T-cell (primary cell): ENCODE measurements at regions of chr17 and their contacts with region 1.

Region 1: DNA sequence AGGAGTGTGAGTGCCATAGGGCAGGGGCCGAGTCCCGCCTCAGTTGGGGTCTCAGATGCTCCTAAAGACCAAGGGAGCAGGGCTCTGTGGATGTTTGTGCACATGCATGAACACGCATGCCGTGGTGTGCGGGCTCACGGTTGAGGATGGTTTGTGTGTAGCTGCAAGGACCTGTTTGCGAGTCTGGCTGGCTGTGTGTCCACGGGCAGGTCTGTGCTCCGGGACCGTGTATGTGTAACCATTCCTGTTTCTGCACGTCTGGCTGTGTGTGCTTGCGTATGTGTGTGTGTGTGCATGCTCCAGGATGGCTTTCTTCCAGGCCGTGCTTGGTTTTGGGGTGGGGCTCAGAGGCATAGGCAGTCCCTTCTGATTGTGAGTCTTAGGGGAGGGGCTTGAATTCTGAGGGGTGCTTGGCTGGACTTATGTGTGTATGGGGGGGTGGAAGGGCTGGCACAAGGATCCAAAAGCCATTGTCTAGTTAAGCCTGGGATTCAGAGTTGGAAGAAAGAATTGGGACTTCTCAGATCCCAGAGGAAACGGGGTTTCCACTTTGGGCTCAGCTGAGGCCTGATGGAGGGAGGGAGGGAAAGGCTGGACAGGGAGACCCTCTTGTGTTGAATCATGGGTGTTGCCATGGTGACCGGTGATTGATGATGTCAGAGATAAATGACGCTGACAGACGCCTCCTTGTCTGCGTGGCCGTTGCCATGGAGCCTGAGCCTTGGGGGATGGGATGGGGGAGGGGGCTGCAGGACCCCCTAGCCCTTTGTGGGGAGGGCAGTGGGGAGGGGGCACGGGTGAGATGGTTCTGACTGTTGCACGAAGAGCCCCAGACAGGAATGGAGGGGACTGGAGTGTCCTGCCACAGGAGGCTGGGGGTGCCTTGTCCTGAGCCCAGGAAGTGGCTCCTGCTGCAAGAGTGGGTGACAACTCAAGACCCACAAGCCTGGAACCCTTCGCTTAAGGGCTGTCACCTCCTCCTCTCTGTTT is 14.3 kb downstream of the GJD3 start:
- DNase-seq: peak in 1 of 35 experiments; percentile 22
- ATAC-seq: no peak
- H3K4me3 ChIP-seq: no peak overlapping the region
- H3K4me3 Mint-ChIP-seq: no peak overlapping the region
- H3K27ac ChIP-seq: no peak overlapping the region
- H3K27ac Mint-ChIP-seq: peak overlapping the region; percentile 29 to 66
- H3K4me1 ChIP-seq: peaks cover 12 to 59% of the 10 kb centered on the region in 2 experiments
- H3K4me1 Mint-ChIP-seq: peaks cover 55 to 64% (median 59%) of the 10 kb centered on the region in 3 donors
- H3K27me3 ChIP-seq: no peaks in the 10 kb centered on the region
- H3K27me3 Mint-ChIP-seq: no peaks in the 10 kb centered on the region

Region 2: DNA sequence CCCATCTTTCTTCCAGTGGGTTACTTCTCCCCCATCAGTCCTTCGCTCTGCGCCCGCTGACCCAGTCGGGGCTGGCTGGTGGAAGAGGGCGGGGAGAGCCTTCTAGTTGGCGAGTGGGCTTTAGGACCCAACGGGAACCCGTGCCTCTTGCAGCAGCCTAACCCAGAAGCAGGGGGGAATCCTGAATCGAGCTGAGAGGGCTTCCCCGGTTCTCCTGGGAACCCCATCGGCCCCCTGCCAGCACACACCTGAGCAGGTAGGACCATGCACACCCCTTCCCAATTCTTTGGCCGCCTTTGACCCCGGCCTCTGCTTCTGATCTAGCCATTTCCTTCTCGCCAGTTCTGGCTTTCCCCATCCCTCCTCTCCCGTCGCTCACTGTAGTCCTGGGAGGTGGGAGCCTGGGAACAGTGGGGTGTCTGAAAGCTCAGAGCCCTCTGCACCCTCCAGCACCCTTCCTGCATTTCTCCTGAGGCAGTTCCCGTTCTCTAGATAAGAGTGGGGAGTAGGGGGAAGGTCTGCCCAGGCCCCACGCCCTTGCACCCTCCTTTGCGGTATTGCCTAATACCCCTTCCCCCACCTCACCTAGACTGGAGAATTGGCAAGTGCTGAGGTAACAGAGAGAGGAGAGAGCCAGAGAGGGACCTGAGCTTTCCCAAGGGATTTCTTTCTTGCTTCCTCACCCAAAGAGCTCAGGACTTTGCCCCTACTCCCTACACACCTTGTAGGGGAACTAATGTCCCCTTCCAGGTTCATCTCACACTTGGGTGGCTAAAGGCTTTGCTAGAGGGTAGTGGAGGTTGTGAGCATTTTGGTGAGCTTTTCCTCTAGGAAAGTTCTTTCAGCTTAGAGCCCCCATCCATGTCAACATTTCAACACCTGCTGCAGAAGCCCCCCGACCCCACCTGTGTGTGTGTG is 40.9 kb before region 1 on chr17 and contains the start of gene RARA:
- CTCF ChIA-PET with region 1: interaction called, 3 to 69 read pairs
- POLR2A ChIA-PET with region 1: interaction called in 1 of 2 experiments, 11 read pairs
- DNase-seq: peak in 4 of 35 experiments; percentile 20 to 55 (median 42)
- ATAC-seq: peak; percentile 31 to 53 (median 34)
- H3K4me3 ChIP-seq: peak within 1 kb of the TSS; percentile 29 to 71
- H3K4me3 Mint-ChIP-seq: peak within 1 kb of the TSS in 1 of 3 donors; percentile 31
- H3K27ac ChIP-seq: peak within 1 kb of the TSS; percentile 1
- H3K27ac Mint-ChIP-seq: peak within 1 kb of the TSS; percentile 33 to 61
- H3K4me1 ChIP-seq: peaks cover 41 to 74% of the 10 kb centered on the region in 2 experiments
- H3K4me1 Mint-ChIP-seq: peaks cover 9 to 33% (median 32%) of the 10 kb centered on the region in 3 donors
- H3K27me3 ChIP-seq: no peaks in the 10 kb centered on the region
- H3K27me3 Mint-ChIP-seq: no peaks in the 10 kb centered on the region
- total RNA-seq, gene RARA: 46.8 to 90.7 (median 69.1) TPM

Region 3: GRCh38 chr17:40371261-40371929 is 21.2 kb after region 1 on chr17:
- CTCF ChIA-PET with region 1: no interaction called
- POLR2A ChIA-PET with region 1: no interaction called
- DNase-seq: peak in 3 of 35 experiments; percentile 20 to 59 (median 21)
- ATAC-seq: peak; percentile 63 to 88 (median 68)
- H3K4me3 ChIP-seq: no peak overlapping the region
- H3K4me3 Mint-ChIP-seq: no peak overlapping the region
- H3K27ac ChIP-seq: no peak overlapping the region
- H3K27ac Mint-ChIP-seq: peak overlapping the region in 1 of 2 donors; percentile 36
- H3K4me1 ChIP-seq: peaks cover 0 to 4% of the 10 kb centered on the region in 2 experiments
- H3K4me1 Mint-ChIP-seq: peaks cover 2 to 4% (median 3%) of the 10 kb centered on the region in 3 donors
- H3K27me3 ChIP-seq: peaks cover 0 to 4% of the 10 kb centered on the region in 2 experiments
- H3K27me3 Mint-ChIP-seq: no peaks in the 10 kb centered on the region